ENCODE measurements at regions of chr2 and their contacts with region 1.

Region 1: GRCh38 chr2:135066710-135067109 is 14.6 kb downstream of the RAB3GAP1 start:
- DNase-seq: no peak
- H3K4me3 ChIP-seq: no peak overlapping the region
- H3K27ac ChIP-seq: no peak overlapping the region
- H3K4me1 ChIP-seq: peaks cover 0 to 31% (median 5%) of the 10 kb centered on the region in 6 donors
- H3K27me3 ChIP-seq: no peaks in the 10 kb centered on the region
- CTCF ChIP-seq: no peak
- POLR2A ChIP-seq: no peak

Region 2: DNA sequence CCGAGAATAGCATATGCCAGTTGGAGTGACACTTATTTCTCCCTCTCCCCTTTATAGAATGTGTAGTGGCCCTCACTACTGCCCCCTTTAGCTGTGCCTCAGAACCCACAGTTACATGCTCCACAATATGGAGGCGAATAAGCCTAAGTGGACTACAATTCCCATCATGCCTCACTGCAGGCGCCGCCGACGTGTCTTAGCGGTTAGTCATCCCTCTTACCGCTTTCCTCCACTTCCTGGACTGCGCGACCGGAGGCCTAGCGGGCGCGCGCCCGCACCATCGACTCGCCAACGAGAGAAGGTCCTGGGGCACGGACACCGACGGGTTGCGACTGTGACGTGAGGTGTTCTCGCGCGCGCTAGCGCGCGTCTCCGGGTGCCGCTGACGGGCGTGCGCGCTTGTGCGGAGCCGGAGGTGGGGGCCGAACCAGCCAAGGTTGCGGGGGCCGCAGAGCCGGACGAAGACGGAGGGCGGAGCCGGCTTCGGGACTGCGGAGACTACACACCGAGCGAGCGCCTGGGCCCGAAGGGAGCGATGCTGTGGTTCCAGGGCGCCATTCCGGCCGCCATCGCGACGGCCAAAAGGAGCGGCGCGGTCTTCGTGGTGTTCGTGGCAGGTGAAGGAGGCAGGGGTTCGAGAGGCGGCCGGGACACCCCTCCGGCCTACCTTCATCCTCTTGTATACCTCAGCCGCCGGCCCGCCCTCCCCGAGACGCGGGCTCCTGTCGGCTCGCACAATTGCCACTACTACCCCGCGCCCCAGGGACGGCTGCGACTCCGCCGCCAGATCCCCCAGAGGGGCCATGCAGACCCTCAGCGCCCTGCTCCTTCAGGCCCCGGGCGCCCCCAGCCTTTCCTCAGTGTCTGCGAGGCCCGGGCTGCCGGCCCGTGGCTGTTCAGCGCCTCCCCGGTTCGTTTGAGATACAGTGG is 675.0 kb after region 1 on chr2 and contains the start of gene UBXN4:
- intact Hi-C with region 1: loop called (anchors 10 kb)
- DNase-seq: peak; percentile 100
- H3K4me3 ChIP-seq: peak within 1 kb of the TSS; percentile 69 to 88 (median 74)
- H3K27ac ChIP-seq: peak within 1 kb of the TSS; percentile 99 to 100 (median 100)
- H3K4me1 ChIP-seq: peaks cover 26 to 47% (median 32%) of the 10 kb centered on the region in 6 donors
- H3K27me3 ChIP-seq: no peaks in the 10 kb centered on the region
- CTCF ChIP-seq: peak in 7 of 11 experiments; percentile 19 to 63 (median 41)
- POLR2A ChIP-seq: peak; percentile 31 to 82 (median 53)
- total RNA-seq, gene UBXN4: 83.6 to 101 (median 92.7) TPM

Measured in spleen (tissue), 13 donors.